ENCODE measurements at regions of chr17 and their contacts with region 1.

Region 1: DNA sequence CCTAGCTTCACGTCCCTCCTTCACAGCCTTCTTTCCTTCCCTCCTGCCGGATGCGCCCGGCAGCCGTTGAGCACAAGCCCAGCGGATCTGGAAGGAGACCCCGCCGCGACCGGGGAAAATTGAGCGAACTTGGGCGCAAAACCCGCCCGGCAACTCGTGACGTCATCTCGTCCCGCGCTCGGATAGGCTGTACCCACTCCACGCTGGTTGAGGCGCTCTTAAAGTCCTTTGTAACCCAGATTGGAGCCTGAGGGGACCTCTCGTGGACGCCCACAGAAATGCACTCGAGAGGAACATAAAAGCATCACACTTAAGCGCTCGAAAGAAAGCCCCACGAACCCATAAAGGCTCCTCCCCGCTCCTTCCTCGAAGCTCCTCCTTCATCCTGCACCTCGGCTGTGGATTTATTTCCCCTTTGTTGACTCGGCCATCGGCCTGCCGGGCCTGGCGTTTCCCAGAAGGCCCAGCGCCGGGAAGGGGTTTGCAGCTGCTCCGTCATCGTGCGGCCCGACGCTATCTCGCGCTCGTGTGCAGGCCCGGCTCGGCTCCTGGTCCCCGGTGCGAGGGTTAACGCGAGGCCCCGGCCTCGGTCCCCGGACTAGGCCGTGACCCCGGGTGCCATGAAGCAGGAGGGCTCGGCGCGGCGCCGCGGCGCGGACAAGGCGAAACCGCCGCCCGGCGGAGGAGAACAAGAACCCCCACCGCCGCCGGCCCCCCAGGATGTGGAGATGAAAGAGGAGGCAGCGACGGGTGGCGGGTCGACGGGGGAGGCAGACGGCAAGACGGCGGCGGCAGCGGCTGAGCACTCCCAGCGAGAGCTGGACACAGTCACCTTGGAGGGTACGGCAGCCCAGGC is at the start of gene PSMD3:
- DNase-seq: peak; percentile 100
- H3K4me3 Mint-ChIP-seq: peak within 1 kb of the TSS; percentile 77
- H3K27ac Mint-ChIP-seq: peak within 1 kb of the TSS; percentile 81
- H3K4me1 Mint-ChIP-seq: peaks cover 26% of the 10 kb centered on the region
- H3K27me3 Mint-ChIP-seq: peaks cover 43% of the 10 kb centered on the region
- CTCF ChIP-seq: no peak
- total RNA-seq, gene PSMD3: 2,152 and 2,179 TPM in 2 replicates

Region 2: GRCh38 chr17:39738931-39739884 is 241.4 kb before region 1 on chr17:
- CTCF ChIA-PET with region 1: interaction called, 1,335 read pairs
- intact Hi-C with region 1: loop called (anchors 1 kb)
- DNase-seq: peak; percentile 100
- H3K4me3 Mint-ChIP-seq: peak overlapping the region; percentile 77
- H3K27ac Mint-ChIP-seq: peak overlapping the region; percentile 21
- H3K4me1 Mint-ChIP-seq: peaks cover 54% of the 10 kb centered on the region
- H3K27me3 Mint-ChIP-seq: no peaks in the 10 kb centered on the region
- CTCF ChIP-seq: no peak

Region 3: DNA sequence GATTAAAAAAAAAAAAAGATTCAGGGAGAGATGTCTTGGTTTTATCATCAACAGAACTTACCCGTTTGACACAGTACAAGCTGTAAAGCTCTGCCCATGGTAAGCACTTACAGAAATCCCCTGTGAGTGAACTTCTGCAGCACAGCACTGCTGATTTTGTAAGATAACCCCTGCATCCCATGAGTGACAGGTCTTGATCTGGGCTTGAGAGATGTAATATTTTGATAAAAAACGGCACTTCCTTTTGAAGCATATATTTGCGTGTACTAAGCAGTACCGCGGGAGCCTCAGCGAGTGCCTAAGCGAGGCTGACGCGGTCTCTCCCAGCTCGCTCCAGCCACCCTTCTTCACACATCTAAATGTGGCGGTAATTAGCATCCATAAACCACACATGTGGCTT is 166.9 kb before region 1 on chr17:
- CTCF ChIA-PET with region 1: interaction called, 1,809 read pairs
- intact Hi-C with region 1: loop called (anchors 1 kb)
- DNase-seq: peak; percentile 64
- H3K4me3 Mint-ChIP-seq: no peak overlapping the region
- H3K27ac Mint-ChIP-seq: no peak overlapping the region
- H3K4me1 Mint-ChIP-seq: peaks cover 19% of the 10 kb centered on the region
- H3K27me3 Mint-ChIP-seq: no peaks in the 10 kb centered on the region
- CTCF ChIP-seq: no peak

Region 4: DNA sequence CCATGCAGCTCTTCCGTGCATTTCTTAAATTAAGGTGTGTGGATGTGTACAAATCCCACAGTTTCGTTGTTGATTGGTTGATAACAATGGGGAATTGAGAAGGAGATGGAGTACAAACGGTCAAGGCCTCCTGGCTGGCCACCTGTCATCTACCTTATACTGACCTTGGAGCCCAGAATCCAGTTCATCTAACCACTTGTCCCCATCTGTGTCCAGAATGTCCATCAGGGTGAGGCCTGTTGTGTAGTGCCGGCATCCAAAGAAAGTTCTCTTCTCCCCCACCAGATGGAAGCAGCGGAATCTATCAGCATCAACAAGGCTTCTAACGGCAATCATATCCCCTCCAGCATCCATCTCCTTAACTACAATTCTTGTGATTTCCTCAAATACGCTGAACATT is 63.7 kb before region 1 on chr17:
- CTCF ChIA-PET with region 1: interaction called, 6,506 read pairs
- intact Hi-C with region 1: loop called (anchors 1 kb)
- DNase-seq: peak; percentile 94
- H3K4me3 Mint-ChIP-seq: no peak overlapping the region
- H3K27ac Mint-ChIP-seq: no peak overlapping the region
- H3K4me1 Mint-ChIP-seq: peaks cover 24% of the 10 kb centered on the region
- H3K27me3 Mint-ChIP-seq: no peaks in the 10 kb centered on the region
- CTCF ChIP-seq: no peak

Region 5: GRCh38 chr17:40062329-40063186 is 82.0 kb after region 1 on chr17 and contains the start of gene THRA:
- CTCF ChIA-PET with region 1: interaction called, 20 read pairs
- intact Hi-C with region 1: no loop called
- DNase-seq: peak; percentile 100
- H3K4me3 Mint-ChIP-seq: peak within 1 kb of the TSS; percentile 54
- H3K27ac Mint-ChIP-seq: peak within 1 kb of the TSS; percentile 27
- H3K4me1 Mint-ChIP-seq: peaks cover 55% of the 10 kb centered on the region
- H3K27me3 Mint-ChIP-seq: peaks cover 52% of the 10 kb centered on the region
- CTCF ChIP-seq: no peak
- total RNA-seq, gene THRA: 107 and 133 TPM in 2 replicates

Region 6: GRCh38 chr17:40433551-40434415 is 453.2 kb after region 1 on chr17:
- CTCF ChIA-PET with region 1: interaction called, 6 read pairs
- intact Hi-C with region 1: loop called (anchors 5 kb)
- DNase-seq: peak; percentile 94
- H3K4me3 Mint-ChIP-seq: no peak overlapping the region
- H3K27ac Mint-ChIP-seq: no peak overlapping the region
- H3K4me1 Mint-ChIP-seq: no peaks in the 10 kb centered on the region
- H3K27me3 Mint-ChIP-seq: peaks cover 43% of the 10 kb centered on the region
- CTCF ChIP-seq: no peak

Region 7: GRCh38 chr17:41211845-41212466 is 1231.4 kb after region 1 on chr17:
- CTCF ChIA-PET with region 1: no interaction called
- intact Hi-C with region 1: no loop called
- DNase-seq: no peak
- H3K4me3 Mint-ChIP-seq: no peak overlapping the region
- H3K27ac Mint-ChIP-seq: no peak overlapping the region
- H3K4me1 Mint-ChIP-seq: peaks cover 15% of the 10 kb centered on the region
- H3K27me3 Mint-ChIP-seq: no peaks in the 10 kb centered on the region
- CTCF ChIP-seq: no peak